ENCODE measurements at regions of chr19 and their contacts with region 1.

Region 1: GRCh38 chr19:16041299-16041990 is 34.9 kb upstream of the TPM4 start:
- DNase-seq: peak; percentile 85 to 93 (median 93)
- ATAC-seq: peak; percentile 93 to 94
- H3K4me3 ChIP-seq: no peak overlapping the region
- H3K27ac ChIP-seq: no peak overlapping the region
- H3K4me1 ChIP-seq: no peaks in the 10 kb centered on the region
- H3K27me3 ChIP-seq: no peaks in the 10 kb centered on the region

Region 2: DNA sequence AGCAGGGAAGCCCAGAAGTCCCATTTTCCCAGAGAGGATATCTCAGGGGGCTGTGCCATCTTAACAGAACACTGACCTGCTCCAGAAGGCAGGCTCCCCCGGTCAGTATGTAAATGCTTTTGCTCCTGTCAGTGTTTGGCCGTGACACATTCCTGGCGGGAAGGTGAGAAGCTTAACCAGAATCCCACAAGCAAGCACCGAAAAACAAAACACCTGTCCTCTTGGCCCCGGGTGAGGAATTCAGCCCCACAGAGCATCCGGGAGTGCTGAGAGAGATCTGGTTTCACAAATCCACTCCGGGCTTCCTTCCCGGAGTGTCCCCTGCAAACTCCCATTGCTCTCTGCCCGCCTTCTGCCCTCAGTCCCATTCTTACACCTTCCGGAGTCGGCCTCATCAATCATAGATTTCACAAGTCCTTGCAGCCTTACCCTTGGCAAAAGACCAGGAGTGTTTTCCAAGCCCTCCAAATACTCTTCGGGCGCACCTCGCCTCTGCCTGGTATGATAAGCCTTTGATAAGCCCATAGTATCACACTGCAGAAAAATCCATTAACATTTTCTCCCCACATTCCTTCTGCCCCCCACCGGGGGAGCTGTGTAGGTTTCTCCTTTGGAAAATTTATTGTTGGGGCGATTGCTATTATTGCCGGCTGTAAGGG is 47.0 kb after region 1 on chr19:
- intact Hi-C with region 1: no loop called
- DNase-seq: peak in 1 of 3 donors; percentile 42
- ATAC-seq: peak; percentile 39 to 42
- H3K4me3 ChIP-seq: no peak overlapping the region
- H3K27ac ChIP-seq: no peak overlapping the region
- H3K4me1 ChIP-seq: no peaks in the 10 kb centered on the region
- H3K27me3 ChIP-seq: no peaks in the 10 kb centered on the region

Region 3: GRCh38 chr19:16111160-16111908 is 69.9 kb after region 1 on chr19 and contains the start of gene RAB8A:
- intact Hi-C with region 1: no loop called
- DNase-seq: peak; percentile 99 to 100 (median 99)
- ATAC-seq: peak; percentile 98
- H3K4me3 ChIP-seq: peak within 1 kb of the TSS; percentile 83
- H3K27ac ChIP-seq: peak within 1 kb of the TSS; percentile 71
- H3K4me1 ChIP-seq: peaks cover 8% of the 10 kb centered on the region
- H3K27me3 ChIP-seq: no peaks in the 10 kb centered on the region
- total RNA-seq, gene RAB8A: 22.6 to 30.0 (median 24.5) TPM

Region 4: GRCh38 chr19:16175954-16176353 is 134.5 kb after region 1 on chr19:
- intact Hi-C with region 1: loop called in 2 of 4 experiments (anchors 5 kb)
- DNase-seq: no peak
- ATAC-seq: no peak
- H3K4me3 ChIP-seq: no peak overlapping the region
- H3K27ac ChIP-seq: no peak overlapping the region
- H3K4me1 ChIP-seq: no peaks in the 10 kb centered on the region
- H3K27me3 ChIP-seq: no peaks in the 10 kb centered on the region

Region 5: DNA sequence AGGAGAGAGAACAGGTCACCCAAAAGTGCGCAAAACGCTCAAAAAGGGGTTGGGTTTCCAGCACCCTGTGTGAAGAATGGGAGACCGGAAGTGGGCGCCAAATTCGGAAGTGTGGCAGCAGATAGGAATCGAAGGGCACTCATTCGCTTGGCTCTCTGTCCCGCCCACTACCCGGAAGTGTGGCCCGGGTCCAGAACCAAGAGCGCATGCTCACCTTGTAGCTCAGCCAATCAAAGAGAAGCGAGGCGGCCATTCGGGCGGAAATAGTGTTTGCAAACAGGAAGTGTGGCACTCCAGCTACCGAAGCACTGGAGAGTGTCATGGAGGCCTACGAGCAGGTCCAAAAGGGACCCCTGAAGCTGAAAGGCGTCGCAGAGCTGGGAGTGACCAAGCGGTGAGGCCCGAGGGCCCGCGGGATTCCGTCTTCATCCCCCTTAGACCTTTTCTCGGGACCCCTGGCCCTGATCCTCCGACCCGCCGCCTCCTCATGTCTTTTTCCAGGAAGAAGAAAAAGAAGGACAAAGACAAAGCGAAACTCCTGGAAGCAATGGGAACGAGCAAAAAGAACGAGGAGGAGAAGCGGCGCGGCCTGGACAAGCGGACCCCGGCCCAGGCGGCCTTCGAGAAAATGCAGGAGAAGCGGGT is 143.8 kb after region 1 on chr19 and contains the start of gene FAM32A:
- intact Hi-C with region 1: loop called in 3 of 4 experiments (anchors 1 to 5 kb)
- DNase-seq: peak; percentile 99
- ATAC-seq: peak; percentile 98
- H3K4me3 ChIP-seq: peak within 1 kb of the TSS; percentile 99
- H3K27ac ChIP-seq: peak within 1 kb of the TSS; percentile 84
- H3K4me1 ChIP-seq: no peaks in the 10 kb centered on the region
- H3K27me3 ChIP-seq: no peaks in the 10 kb centered on the region
- total RNA-seq, gene FAM32A: 37.5 to 42.5 (median 40.1) TPM

Measured in right cardiac atrium (tissue), 5 donors.